HEK293T (cell line): ENCODE measurements at regions of chr2 and their contacts with region 1.

Region 1: GRCh38 chr2:189762551-189763298 is at the start of gene OSGEPL1:
- DNase-seq: peak; percentile 86

Region 2: DNA sequence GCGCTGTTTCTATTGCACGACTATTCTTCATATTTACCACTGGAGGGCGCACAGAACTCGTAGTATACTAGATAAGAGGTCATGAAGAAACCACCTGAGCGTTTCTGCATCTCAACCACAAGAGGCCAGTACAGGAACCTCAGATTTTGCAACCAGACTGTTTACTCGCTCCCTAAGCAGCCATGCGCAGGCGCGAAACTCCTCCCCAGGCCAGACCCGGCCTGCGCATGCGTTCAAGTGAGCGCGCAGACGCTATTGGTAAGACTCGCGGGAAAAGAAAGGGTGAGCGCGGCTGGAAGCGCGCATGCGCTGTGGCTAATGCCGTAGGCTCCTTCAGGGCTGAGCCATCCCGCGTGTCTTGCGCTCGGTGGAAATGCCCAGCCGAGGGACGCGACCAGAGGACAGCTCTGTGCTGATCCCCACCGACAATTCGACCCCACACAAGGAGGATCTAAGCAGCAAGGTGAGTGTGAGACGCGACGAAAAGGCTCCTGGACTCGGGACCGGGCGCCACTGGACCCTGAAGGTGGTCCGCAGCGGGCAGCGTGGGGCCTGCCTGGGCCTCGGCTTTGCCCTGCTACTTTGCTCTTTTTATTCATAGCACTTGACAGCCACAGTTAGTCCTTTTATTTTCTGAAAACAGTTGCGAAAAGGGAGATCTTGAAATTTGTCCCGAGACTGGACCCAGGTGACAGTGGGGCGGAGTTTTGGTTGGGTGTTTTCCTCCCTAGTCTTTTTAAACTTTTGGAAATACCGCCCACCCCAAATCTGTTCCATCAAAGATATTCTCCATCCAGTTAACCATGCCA is 101.4 kb before region 1 on chr2 and contains the start of gene ASNSD1:
- CTCF ChIA-PET with region 1: no interaction called
- POLR2A ChIA-PET with region 1: interaction called, 14 read pairs
- DNase-seq: peak; percentile 98

Region 3: GRCh38 chr2:189783927-189784867 is 21.5 kb after region 1 on chr2 and contains the starts of genes ORMDL1 and PMS1:
- CTCF ChIA-PET with region 1: interaction called, 3 read pairs
- POLR2A ChIA-PET with region 1: interaction called, 11 read pairs
- DNase-seq: peak; percentile 94

Region 4: DNA sequence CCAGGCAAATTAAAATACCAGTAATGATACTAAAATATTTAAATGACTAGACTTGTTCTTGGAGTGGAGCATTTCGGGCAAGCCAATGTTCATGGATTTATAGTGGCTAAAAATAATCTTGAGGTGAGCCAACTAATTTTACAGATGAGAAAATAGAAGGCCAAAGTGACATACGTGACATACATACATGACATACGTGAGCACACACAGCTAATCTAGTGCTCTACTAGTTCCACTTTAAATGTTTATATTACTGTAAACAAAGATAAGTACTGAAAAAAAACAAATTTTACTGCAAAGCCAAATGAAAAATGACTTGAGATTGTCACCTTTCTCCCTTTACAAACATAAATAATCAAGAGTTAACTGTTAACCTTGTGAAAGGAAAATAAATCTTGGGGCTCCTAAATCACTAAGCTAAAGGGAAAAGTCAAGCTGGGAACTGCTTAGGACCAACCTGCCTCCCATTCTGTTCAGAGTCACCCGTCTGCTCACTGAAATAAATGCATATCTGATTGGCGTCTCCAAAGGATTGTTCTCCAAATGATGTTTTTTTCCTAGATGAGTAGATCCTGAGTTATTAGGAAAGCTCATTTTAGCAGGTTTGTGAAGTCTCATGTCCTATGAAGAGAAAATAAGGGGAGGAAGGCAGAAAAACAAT is 118.2 kb after region 1 on chr2:
- CTCF ChIA-PET with region 1: no interaction called
- POLR2A ChIA-PET with region 1: no interaction called
- DNase-seq: no peak